ENCODE measurements at regions of chr17 and their contacts with region 1.

Region 1: DNA sequence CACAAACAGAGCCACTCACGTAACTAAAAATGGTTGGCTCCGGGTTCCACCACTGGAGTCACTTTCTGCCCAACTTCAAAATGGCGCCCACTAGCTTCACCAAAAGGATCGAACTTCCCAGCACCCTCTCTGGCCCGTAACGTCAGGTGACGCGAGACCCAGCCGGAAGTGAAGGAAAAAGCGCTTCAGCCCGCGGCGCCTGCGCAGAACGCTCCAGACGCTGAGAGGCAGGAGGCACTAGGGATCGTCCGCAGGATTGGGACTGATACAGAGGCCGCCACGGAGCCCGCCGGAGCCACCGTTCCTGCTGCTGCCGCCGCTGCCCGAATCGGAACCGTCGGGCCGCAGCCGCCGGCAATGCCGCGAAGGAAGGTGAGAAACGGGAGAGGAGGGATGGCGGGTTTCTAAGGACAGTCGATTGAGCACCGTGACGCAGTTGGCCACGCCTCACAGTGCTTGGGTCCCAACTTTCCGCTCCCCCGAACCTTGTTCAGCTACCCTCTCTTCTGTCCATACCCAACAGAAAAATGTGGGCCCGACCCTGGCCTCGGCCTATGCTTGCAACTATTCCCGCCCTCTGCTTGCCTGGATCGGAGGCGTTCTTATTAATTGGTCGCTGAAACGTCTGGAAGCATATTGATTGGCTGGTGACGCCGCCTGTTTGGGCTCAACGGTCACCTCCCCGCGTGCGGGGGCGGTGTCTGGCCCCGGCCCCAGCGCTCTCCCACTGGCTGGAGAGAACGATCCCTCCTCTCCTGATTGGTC is at the start of gene KAT7:
- DNase-seq: peak; percentile 100
- ATAC-seq: peak; percentile 92
- H3K4me3 ChIP-seq: peak within 1 kb of the TSS; percentile 84
- H3K27ac ChIP-seq: peak within 1 kb of the TSS; percentile 76
- H3K4me1 ChIP-seq: peaks cover 16% of the 10 kb centered on the region
- H3K27me3 ChIP-seq: no peaks in the 10 kb centered on the region
- CTCF ChIP-seq: no peak
- total RNA-seq, gene KAT7: 39.1 and 45.8 TPM in 2 replicates

Region 2: GRCh38 chr17:49414622-49415350 is 373.9 kb before region 1 on chr17 and contains the start of gene PHB1:
- CTCF ChIA-PET with region 1: no interaction called
- POLR2A ChIA-PET with region 1: no interaction called
- intact Hi-C with region 1: loop called (anchors 1 kb)
- DNase-seq: peak; percentile 100
- ATAC-seq: peak; percentile 99
- H3K4me3 ChIP-seq: peak within 1 kb of the TSS; percentile 89
- H3K27ac ChIP-seq: peak within 1 kb of the TSS; percentile 2; the same call in 1 of the 2 replicates
- H3K4me1 ChIP-seq: peaks cover 14% of the 10 kb centered on the region
- H3K27me3 ChIP-seq: no peaks in the 10 kb centered on the region
- CTCF ChIP-seq: no peak
- total RNA-seq, gene PHB1: 585 and 641 TPM in 2 replicates

Region 3: GRCh38 chr17:49979748-49980479 is 191.3 kb after region 1 on chr17:
- CTCF ChIA-PET with region 1: no interaction called
- POLR2A ChIA-PET with region 1: interaction called, 13 read pairs
- intact Hi-C with region 1: no loop called
- DNase-seq: no peak
- ATAC-seq: no peak
- H3K4me3 ChIP-seq: no peak overlapping the region
- H3K27ac ChIP-seq: no peak overlapping the region
- H3K4me1 ChIP-seq: no peaks in the 10 kb centered on the region
- H3K27me3 ChIP-seq: peaks cover 13% of the 10 kb centered on the region
- CTCF ChIP-seq: no peak

Measured in PC-3 (cell line).